Activated CD4-positive, alpha-beta T cell treated with anti-CD3 and anti-CD28 coated beads for 36 hours (primary cell): ENCODE measurements at regions of chr20 and their contacts with region 1.

Region 1: DNA sequence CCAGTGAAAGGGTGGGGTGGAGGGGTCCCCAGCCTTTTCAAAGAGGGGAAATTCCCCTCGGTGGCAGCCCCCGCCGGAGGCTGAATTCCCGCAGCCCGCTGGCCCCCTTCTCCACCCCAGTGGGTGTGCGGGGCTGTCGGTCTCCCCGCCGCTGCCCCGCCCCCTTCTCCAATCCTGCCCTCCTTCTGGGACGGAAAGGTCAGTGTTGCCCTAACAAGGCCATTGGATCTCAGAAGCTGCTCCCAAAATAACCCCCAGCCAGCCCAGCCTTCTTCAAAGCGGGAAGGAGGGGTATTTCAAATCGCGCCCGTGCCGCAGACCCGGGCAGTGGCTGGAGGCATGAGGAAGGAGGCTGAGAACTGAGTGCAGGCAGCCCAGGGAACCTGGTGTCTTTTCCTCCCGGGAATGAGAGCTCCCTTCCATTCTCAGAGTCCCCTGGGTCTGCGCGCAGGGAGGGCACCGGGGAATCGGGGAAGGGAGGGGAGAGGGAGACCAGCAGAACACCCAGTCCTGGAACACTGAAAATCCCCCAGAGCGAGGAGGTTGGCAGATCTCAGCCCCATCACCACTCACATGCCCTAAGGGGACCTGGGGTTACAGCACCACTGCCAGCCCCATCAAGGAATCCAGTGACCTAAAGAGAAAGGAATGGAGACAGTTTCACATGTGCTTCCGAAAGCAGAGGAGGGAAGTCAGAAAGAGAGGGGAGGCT is at the start of gene JPH2:
- DNase-seq: no peak
- ATAC-seq: no peak
- H3K4me3 Mint-ChIP-seq: no peak within 1 kb of the TSS
- H3K27ac Mint-ChIP-seq: no peak within 1 kb of the TSS
- H3K4me1 Mint-ChIP-seq: peaks cover 4% of the 10 kb centered on the region
- H3K27me3 Mint-ChIP-seq: peaks cover 42% of the 10 kb centered on the region
- total RNA-seq, gene JPH2: 0.07 TPM

Region 2: GRCh38 chr20:44153636-44154043 is 33.6 kb before region 1 on chr20:
- CTCF ChIA-PET with region 1: interaction called, 11 read pairs
- POLR2A ChIA-PET with region 1: no interaction called
- intact Hi-C with region 1: no loop called
- DNase-seq: peak; percentile 21
- ATAC-seq: peak; percentile 77
- H3K4me3 Mint-ChIP-seq: no peak overlapping the region
- H3K27ac Mint-ChIP-seq: peak overlapping the region; percentile 72
- H3K4me1 Mint-ChIP-seq: peaks cover 14% of the 10 kb centered on the region
- H3K27me3 Mint-ChIP-seq: peaks cover 2% of the 10 kb centered on the region

Region 3: GRCh38 chr20:44160133-44160532 is 27.1 kb before region 1 on chr20:
- CTCF ChIA-PET with region 1: interaction called, 11 read pairs
- POLR2A ChIA-PET with region 1: no interaction called
- intact Hi-C with region 1: no loop called
- DNase-seq: no peak
- ATAC-seq: no peak
- H3K4me3 Mint-ChIP-seq: no peak overlapping the region
- H3K27ac Mint-ChIP-seq: no peak overlapping the region
- H3K4me1 Mint-ChIP-seq: no peaks in the 10 kb centered on the region
- H3K27me3 Mint-ChIP-seq: peaks cover 35% of the 10 kb centered on the region